H1 (cell line): ENCODE measurements at regions of chr11 and their contacts with region 1.

Region 1: GRCh38 chr11:19951558-19952115 is 208.6 kb downstream of the DBX1 start:
- DNase-seq: no peak
- H3K4me3 ChIP-seq: no peak overlapping the region
- H3K27ac ChIP-seq: no peak overlapping the region
- H3K4me1 ChIP-seq: peaks cover 8 to 21% (median 20%) of the 10 kb centered on the region in 4 experiments; a peak in 6 of 7 replicates
- H3K27me3 ChIP-seq: no peaks in the 10 kb centered on the region
- CTCF ChIP-seq: peak in 2 of 3 experiments; percentile 43 to 65; a peak in 3 of 4 replicates
- EP300 ChIP-seq: no peak
- POLR2A ChIP-seq: no peak
- RAD21 ChIP-seq: peak; percentile 74 to 80

Region 2: GRCh38 chr11:19962801-19963175 is 11.2 kb after region 1 on chr11:
- CTCF ChIA-PET with region 1: interaction called, 27 read pairs
- POLR2A ChIA-PET with region 1: interaction called, 3 read pairs
- DNase-seq: no peak
- H3K4me3 ChIP-seq: no peak overlapping the region
- H3K27ac ChIP-seq: no peak overlapping the region
- H3K4me1 ChIP-seq: no peaks in the 10 kb centered on the region; a peak in 1 of 7 replicates
- H3K27me3 ChIP-seq: no peaks in the 10 kb centered on the region
- CTCF ChIP-seq: no peak
- EP300 ChIP-seq: no peak
- POLR2A ChIP-seq: no peak
- RAD21 ChIP-seq: no peak

Region 3: GRCh38 chr11:20022363-20023081 is 70.9 kb after region 1 on chr11:
- CTCF ChIA-PET with region 1: interaction called, 72 read pairs
- POLR2A ChIA-PET with region 1: interaction called, 3 read pairs
- DNase-seq: peak in 1 of 2 experiments; percentile 70
- H3K4me3 ChIP-seq: peak overlapping the region; percentile 43 to 66 (median 56)
- H3K27ac ChIP-seq: peak overlapping the region; percentile 50; the same call in 1 of the 2 replicates
- H3K4me1 ChIP-seq: peaks cover 17 to 44% (median 42%) of the 10 kb centered on the region in 4 experiments
- H3K27me3 ChIP-seq: no peaks in the 10 kb centered on the region
- CTCF ChIP-seq: no peak
- EP300 ChIP-seq: no peak
- POLR2A ChIP-seq: no peak
- RAD21 ChIP-seq: peak; percentile 10 to 19; a peak in 2 of 4 replicates

Region 4: GRCh38 chr11:20050551-20051333 is 99.1 kb after region 1 on chr11:
- CTCF ChIA-PET with region 1: interaction called, 56 read pairs
- POLR2A ChIA-PET with region 1: interaction called, 4 read pairs
- DNase-seq: no peak
- H3K4me3 ChIP-seq: peak overlapping the region in 3 of 4 experiments; percentile 4 to 26 (median 11); a peak in 3 of 8 replicates
- H3K27ac ChIP-seq: no peak overlapping the region
- H3K4me1 ChIP-seq: peaks cover 13 to 24% (median 18%) of the 10 kb centered on the region in 4 experiments
- H3K27me3 ChIP-seq: no peaks in the 10 kb centered on the region
- CTCF ChIP-seq: no peak
- EP300 ChIP-seq: no peak
- POLR2A ChIP-seq: no peak
- RAD21 ChIP-seq: 0 out of 4 replicates have a peak, but pooled peaks of 1 of the 2 experiments have one; percentile 4

Region 5: DNA sequence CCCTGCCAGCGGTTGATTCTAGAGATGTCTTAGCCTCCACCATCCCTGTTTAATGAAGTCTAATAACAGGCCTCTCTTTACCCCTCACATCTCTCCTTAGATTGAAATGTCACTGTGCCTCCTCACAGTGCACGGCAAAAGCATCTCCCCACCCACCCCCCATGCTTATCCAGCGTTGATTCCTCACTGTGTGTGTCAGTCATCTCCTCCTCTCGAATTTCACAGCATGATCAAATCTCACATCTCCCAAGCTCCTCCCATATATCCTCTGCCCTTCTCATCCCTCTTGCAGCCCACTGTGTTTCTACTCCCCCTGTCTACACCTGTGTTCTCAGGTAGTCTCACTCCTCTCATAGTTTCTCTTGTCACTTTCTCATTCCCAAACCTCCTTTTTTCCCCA is 124.0 kb after region 1 on chr11:
- CTCF ChIA-PET with region 1: interaction called, 35 read pairs
- POLR2A ChIA-PET with region 1: no interaction called
- DNase-seq: no peak
- H3K4me3 ChIP-seq: no peak overlapping the region
- H3K27ac ChIP-seq: no peak overlapping the region
- H3K4me1 ChIP-seq: no peaks in the 10 kb centered on the region
- H3K27me3 ChIP-seq: no peaks in the 10 kb centered on the region
- CTCF ChIP-seq: no peak
- EP300 ChIP-seq: no peak
- POLR2A ChIP-seq: no peak
- RAD21 ChIP-seq: no peak

Region 6: GRCh38 chr11:20110908-20111669 is 159.5 kb after region 1 on chr11:
- CTCF ChIA-PET with region 1: interaction called, 19 read pairs
- POLR2A ChIA-PET with region 1: interaction called, 4 read pairs
- DNase-seq: peak in 1 of 2 experiments; percentile 76
- H3K4me3 ChIP-seq: no peak overlapping the region
- H3K27ac ChIP-seq: no peak overlapping the region; the same call in 1 of the 2 replicates
- H3K4me1 ChIP-seq: no peaks in the 10 kb centered on the region
- H3K27me3 ChIP-seq: no peaks in the 10 kb centered on the region
- CTCF ChIP-seq: peak; percentile 85 to 99 (median 94)
- EP300 ChIP-seq: no peak
- POLR2A ChIP-seq: no peak
- RAD21 ChIP-seq: peak; percentile 83 to 88